Activated T-helper 2 cell treated with anti-CD3 and anti-CD28 coated beads, Interferon-gamma antibody, Interleukin-2, Interleukin-4, amounts not matched to agents 10 μg/mL and 5 μg/mL and 100 μg/mL, durations not matched to agents 14 hours and 24 hours and 36 hours (primary cell): ENCODE measurements at regions of chr14 and their contacts with region 1.

Region 1: DNA sequence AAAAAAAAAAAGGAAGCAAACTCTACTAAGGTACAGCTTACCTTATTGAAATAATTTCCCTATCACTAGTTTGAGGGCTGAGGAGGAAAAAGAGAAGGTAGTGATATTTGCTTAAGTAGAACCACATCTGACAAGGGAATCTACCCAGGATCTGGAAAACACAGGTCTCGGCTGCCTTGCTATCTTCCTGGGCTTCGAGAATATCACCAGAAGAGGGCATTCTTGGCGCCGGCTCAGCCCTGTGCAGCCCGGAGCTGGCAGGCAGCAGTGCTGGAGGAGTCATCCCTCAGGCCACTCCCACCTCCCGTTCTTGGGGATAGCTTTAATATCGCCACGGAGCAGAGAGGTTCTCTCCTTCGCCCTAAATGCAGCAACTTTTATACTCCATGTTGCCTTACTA is 1181.2 kb downstream of the VRK1 start:
- DNase-seq: peak; percentile 68
- H3K4me3 Mint-ChIP-seq: peak overlapping the region; percentile 91
- H3K27ac Mint-ChIP-seq: peak overlapping the region; percentile 95
- H3K4me1 Mint-ChIP-seq: peaks cover 51% of the 10 kb centered on the region
- H3K27me3 Mint-ChIP-seq: no peaks in the 10 kb centered on the region

Region 2: GRCh38 chr14:97120611-97121031 is 857.7 kb before region 1 on chr14:
- intact Hi-C with region 1: no loop called
- DNase-seq: peak; percentile 45
- H3K4me3 Mint-ChIP-seq: peak overlapping the region; percentile 31
- H3K27ac Mint-ChIP-seq: peak overlapping the region; percentile 85
- H3K4me1 Mint-ChIP-seq: peaks cover 19% of the 10 kb centered on the region
- H3K27me3 Mint-ChIP-seq: no peaks in the 10 kb centered on the region

Region 3: GRCh38 chr14:97380539-97380941 is 597.8 kb before region 1 on chr14:
- intact Hi-C with region 1: loop called (anchors 5 kb)
- DNase-seq: peak; percentile 38
- H3K4me3 Mint-ChIP-seq: no peak overlapping the region
- H3K27ac Mint-ChIP-seq: peak overlapping the region; percentile 76
- H3K4me1 Mint-ChIP-seq: peaks cover 65% of the 10 kb centered on the region
- H3K27me3 Mint-ChIP-seq: no peaks in the 10 kb centered on the region

Region 4: GRCh38 chr14:97620066-97620465 is 358.3 kb before region 1 on chr14:
- intact Hi-C with region 1: loop called (anchors 5 kb)
- DNase-seq: no peak
- H3K4me3 Mint-ChIP-seq: peak overlapping the region; percentile 59
- H3K27ac Mint-ChIP-seq: peak overlapping the region; percentile 84
- H3K4me1 Mint-ChIP-seq: peaks cover 47% of the 10 kb centered on the region
- H3K27me3 Mint-ChIP-seq: no peaks in the 10 kb centered on the region

Region 5: DNA sequence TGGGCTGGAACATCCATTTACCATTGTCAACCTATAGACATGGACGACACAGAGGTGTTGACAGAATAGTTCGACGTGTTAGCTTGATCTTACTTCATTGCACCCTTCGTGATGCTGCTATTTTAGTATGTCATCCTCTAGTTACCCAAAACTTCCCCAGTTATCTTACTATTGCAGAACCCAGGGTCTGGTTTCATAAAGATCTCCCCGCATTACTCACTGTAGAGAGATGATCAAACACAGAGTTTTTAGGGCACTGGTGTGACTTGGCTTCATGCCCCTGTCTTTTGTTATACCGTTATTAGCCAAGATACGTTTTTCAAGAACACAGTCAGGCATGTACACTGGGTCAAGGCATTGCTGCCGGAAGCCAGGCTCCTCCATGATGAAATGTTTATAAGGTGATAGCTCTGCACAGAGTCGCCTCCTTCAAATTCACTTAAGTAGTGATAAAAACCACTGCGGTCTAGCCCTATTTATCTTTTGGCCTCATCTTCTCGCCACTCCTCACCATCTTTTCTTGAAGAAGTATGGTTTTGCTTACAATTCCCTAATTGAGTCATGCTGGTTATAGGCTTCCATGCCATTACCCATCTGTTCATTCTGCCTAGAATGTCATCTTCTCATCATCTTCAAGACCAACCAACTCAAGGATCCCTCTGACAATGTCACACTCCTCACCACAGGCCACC is 53.3 kb before region 1 on chr14:
- intact Hi-C with region 1: loop called (anchors 2 kb)
- DNase-seq: peak; percentile 18
- H3K4me3 Mint-ChIP-seq: no peak overlapping the region
- H3K27ac Mint-ChIP-seq: peak overlapping the region; percentile 10
- H3K4me1 Mint-ChIP-seq: peaks cover 19% of the 10 kb centered on the region
- H3K27me3 Mint-ChIP-seq: peaks cover 11% of the 10 kb centered on the region

Region 6: DNA sequence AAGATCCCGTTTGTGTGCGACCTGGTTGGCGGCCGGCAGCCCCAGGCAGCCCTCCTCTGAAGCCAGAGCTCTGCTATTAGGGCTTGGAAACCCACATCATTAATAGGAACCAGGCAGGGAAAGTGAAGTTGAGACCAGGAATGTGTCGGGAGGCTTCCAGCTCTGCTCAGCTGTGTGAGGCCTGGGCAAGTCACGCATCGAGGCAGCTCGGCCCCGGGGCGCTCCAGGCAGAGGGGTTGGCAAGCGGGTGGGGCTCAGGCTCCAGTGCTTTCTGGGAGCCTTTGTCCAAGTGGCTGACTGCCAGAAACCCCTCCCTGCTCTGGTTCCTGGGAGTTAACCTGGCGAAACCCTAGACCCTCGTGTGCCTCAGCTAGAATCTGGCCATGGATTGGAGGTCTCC is 29.5 kb before region 1 on chr14:
- intact Hi-C with region 1: no loop called
- DNase-seq: no peak
- H3K4me3 Mint-ChIP-seq: no peak overlapping the region
- H3K27ac Mint-ChIP-seq: no peak overlapping the region
- H3K4me1 Mint-ChIP-seq: peaks cover 7% of the 10 kb centered on the region
- H3K27me3 Mint-ChIP-seq: no peaks in the 10 kb centered on the region

Region 7: DNA sequence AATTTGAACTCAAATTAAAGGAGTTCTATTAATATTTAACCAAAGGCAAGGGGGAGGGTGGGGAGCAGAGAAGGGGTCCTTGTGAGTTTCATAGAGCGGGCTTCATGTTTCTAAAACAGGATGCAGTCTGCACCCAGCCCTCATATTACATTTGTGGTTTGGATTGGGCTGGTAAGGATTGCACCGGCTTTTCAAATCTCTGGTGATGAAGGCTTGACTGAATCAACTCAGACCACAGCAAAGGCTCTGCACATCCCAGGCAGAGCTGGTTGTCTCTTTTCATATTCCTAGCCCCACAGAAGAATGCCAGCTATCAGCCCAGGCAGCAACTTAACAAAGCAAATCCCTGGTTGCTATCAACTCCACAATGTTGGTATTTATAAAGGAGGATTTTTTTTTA is 40.3 kb after region 1 on chr14:
- intact Hi-C with region 1: no loop called
- DNase-seq: no peak
- H3K4me3 Mint-ChIP-seq: no peak overlapping the region
- H3K27ac Mint-ChIP-seq: no peak overlapping the region
- H3K4me1 Mint-ChIP-seq: peaks cover 19% of the 10 kb centered on the region
- H3K27me3 Mint-ChIP-seq: no peaks in the 10 kb centered on the region

Region 8: DNA sequence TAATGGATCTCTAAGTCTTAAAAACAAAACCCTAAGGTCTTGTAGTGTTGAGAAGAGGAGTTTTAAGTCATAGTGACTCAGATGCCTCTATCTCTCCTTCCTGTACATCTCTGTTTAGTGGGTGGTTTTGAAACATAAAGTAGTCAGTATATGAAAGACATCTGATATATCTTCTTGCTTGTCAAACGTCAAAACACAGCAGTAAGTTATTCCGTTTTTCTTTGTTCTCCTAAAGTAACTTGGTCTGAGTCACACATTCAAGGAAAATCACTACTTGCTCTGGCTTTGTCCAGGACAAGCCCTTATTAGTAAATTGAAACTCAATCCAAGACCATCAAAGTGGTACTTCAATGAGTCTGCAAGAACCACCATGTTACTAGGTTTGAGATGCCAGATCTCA is 121.2 kb after region 1 on chr14:
- intact Hi-C with region 1: loop called (anchors 10 kb)
- DNase-seq: no peak
- H3K4me3 Mint-ChIP-seq: no peak overlapping the region
- H3K27ac Mint-ChIP-seq: peak overlapping the region; percentile 29
- H3K4me1 Mint-ChIP-seq: peaks cover 31% of the 10 kb centered on the region
- H3K27me3 Mint-ChIP-seq: no peaks in the 10 kb centered on the region

Region 9: DNA sequence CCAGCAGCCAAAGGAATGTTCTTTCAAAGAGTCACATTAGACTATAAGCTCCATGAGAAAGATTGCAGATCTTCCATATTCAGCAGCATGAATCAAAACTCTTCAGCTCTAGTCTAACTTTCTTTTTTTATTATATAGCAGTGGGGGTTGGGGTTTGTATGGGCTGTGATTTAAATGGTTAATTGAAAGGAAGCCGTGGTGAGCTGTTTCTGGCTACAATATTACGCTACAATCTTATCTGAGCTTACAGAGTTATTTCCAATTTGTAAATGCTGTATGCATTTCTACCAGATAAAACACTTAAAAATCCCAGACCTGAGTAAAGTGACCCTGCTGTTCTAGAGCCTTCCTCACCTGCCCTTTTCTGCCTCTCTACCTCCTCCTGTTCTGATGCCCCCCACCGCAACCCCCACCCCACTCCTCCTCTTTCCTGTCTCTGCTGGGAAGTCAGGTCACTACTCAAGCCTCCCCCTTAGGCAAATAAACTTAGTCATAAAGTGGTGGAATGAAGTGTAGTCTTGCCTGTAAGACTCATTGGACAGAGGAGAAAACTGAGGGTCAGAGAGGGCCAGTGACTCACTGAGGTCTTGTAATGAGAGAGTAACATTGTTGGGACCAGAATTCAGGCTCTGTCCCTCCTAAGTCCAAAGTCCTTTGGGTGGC is 204.2 kb after region 1 on chr14:
- intact Hi-C with region 1: loop called (anchors 5 kb)
- DNase-seq: no peak
- H3K4me3 Mint-ChIP-seq: peak overlapping the region; percentile 26
- H3K27ac Mint-ChIP-seq: peak overlapping the region; percentile 94
- H3K4me1 Mint-ChIP-seq: peaks cover 84% of the 10 kb centered on the region
- H3K27me3 Mint-ChIP-seq: no peaks in the 10 kb centered on the region

Region 10: GRCh38 chr14:99271951-99272631 is 1293.8 kb after region 1 on chr14 and contains the start of gene BCL11B:
- intact Hi-C with region 1: loop called (anchors 2 kb)
- DNase-seq: peak; percentile 88
- H3K4me3 Mint-ChIP-seq: peak within 1 kb of the TSS; percentile 93
- H3K27ac Mint-ChIP-seq: peak within 1 kb of the TSS; percentile 94
- H3K4me1 Mint-ChIP-seq: peaks cover 37% of the 10 kb centered on the region
- H3K27me3 Mint-ChIP-seq: peaks cover 10% of the 10 kb centered on the region
- total RNA-seq, gene BCL11B: 34.1 and 34.9 TPM in 2 replicates